Transverse colon (tissue), 4 donors: ENCODE measurements at regions of chr2 and their contacts with region 1.

Region 1: DNA sequence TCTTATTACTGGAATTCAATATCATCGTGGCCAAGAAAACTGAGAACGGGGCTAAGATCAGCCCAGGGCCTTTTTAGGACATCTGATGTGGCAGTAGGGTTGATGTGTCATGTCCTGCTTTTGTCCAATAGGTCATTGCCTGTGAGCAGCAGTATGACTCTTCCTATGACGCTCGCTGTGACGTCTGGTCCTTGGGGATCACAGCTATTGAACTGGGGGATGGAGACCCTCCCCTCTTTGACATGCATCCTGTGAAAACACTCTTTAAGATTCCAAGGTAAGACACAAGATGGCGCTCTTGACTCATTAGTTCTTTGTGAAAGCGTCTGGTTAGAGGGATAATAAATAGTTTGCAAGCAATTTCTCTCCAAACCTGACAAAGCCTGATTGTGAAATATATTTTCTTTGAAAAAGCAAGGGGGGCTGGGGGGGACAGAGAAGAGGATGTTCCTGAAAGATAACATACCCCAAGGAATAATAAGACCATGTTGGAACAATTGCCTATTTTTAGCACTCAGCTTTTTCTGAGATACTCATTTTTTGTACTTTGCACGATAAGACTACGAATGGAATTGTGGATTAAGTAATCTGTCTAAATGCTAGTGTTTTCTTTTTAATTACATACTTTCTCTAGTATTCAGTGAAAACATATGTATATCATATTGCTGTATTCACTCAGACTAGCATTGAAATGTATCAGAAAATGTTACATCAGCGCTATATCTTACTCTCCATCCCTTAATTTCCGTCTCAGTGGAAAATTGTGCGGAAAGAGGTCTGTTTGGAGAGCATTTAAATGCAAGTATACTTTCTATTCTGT is 58.1 kb downstream of the MYO3B start:
- DNase-seq: no peak
- H3K4me3 ChIP-seq: no peak overlapping the region
- H3K27ac ChIP-seq: no peak overlapping the region
- H3K4me1 ChIP-seq: no peaks in the 10 kb centered on the region
- H3K27me3 ChIP-seq: peaks cover 23% of the 10 kb centered on the region
- CTCF ChIP-seq: peak; percentile 40 to 54 (median 51)
- EP300 ChIP-seq: no peak
- POLR2A ChIP-seq: no peak

Region 2: DNA sequence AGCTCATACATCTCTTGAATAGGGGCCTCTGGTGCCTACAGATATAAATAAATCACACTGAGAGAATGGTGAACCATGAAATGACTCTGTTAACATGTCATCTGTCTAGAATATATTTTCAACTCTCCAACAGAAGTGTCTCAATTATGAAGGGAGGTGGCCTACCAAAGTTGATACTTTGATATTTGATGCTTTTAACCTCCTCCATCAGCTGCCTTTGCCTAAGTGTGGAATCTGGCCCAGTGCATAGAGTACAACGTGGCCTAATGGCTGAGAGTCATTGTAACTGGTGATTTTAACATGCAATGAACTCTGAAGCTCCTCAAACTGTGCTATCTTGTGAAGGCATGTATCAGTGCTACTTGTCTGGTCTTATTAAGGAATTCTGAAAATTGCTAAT is 35.3 kb after region 1 on chr2:
- in situ Hi-C with region 1: no loop called
- intact Hi-C with region 1: loop called (anchors 1 kb)
- DNase-seq: no peak
- H3K4me3 ChIP-seq: no peak overlapping the region
- H3K27ac ChIP-seq: no peak overlapping the region
- H3K4me1 ChIP-seq: no peaks in the 10 kb centered on the region
- H3K27me3 ChIP-seq: no peaks in the 10 kb centered on the region
- CTCF ChIP-seq: no peak
- EP300 ChIP-seq: no peak
- POLR2A ChIP-seq: no peak